ENCODE measurements at regions of chr3 and their contacts with region 1.

Region 1: DNA sequence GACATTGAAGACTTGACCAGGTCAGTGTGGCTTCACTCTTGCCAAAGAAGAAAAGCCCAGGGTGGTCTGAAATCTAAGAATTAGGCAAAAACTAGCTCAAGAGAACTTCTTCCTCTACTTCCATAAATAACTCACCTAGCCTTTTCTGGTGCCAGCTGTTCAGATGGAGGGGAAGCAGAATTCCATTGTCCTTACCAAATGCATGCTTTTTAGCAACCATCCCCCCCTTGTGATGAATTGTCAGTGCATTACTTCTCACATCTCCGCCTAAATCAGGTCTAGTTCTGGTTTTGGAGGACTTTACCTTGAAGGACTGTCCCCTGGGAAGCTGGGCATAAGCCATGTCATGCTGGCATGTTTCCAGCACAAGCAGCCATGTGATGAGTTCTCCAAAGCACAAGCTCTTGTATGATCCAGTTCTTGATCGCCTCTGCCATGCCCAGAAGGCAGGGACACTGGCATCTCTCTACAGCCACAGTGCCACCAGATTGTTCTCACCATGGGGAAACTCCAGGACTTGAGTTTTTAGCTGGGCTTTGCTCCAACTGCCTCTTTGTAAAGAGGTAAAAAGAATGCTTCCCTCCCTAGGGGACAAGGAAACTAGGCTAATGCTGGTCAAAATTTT is 96.4 kb upstream of the IL12A start:
- DNase-seq: peak in 1 of 2 donors; percentile 50
- ATAC-seq: peak; percentile 52 to 86 (median 63)
- H3K4me3 ChIP-seq: no peak overlapping the region
- H3K27ac ChIP-seq: peak overlapping the region in 6 of 10 donors; percentile 4 to 68 (median 58)
- H3K4me1 ChIP-seq: peaks cover 13 to 74% (median 62%) of the 10 kb centered on the region in 9 donors
- H3K27me3 ChIP-seq: no peaks in the 10 kb centered on the region
- CTCF ChIP-seq: no peak

Region 2: GRCh38 chr3:159326998-159327397 is 565.3 kb before region 1 on chr3:
- intact Hi-C with region 1: no loop called
- DNase-seq: no peak
- ATAC-seq: no peak
- H3K4me3 ChIP-seq: no peak overlapping the region
- H3K27ac ChIP-seq: no peak overlapping the region
- H3K4me1 ChIP-seq: no peaks in the 10 kb centered on the region
- H3K27me3 ChIP-seq: no peaks in the 10 kb centered on the region
- CTCF ChIP-seq: no peak

Region 3: DNA sequence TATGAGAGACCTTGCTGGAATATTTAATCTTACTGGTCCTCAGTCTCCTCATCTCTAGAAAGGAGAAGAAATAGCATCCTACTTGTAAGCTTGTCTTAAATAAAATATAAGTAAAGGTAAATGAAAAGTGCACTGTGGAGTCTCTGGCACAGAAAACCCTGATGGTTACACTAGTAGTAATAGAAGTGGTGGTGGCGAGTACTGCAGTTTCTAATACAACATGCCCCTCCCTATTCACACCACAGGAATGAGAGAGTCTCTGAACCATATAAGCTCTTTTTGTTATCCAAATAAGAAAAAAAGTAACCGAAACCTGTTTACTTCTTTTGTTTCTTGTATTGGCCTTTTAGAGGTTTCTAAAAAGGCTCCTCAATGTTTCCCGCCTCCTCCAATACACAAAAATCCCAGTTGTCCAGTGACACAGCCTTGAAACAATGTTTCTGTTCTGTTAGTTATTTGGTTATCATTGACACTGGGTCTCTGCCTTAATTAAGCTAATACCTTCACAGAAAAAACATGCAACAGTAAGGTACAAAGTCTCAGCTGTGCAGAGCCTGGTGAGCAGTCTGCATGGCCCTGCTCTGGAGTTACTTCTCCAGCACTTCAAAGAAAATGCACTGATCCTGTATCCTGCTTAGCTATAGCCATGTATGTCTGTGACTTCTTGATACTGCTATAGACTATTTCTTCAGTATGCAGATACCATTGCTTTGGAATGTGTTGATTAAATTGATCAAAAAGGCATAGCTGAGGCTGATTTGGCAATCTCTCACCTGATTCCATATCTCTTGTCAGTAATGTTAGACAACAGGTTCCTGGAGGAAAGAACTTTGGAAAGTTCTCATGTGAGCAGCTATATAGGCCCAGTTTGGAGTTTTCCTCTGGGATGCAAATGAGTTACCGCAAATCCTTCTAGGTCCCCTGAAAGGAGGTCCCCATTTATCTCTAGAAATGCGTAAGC is 219.3 kb before region 1 on chr3:
- intact Hi-C with region 1: no loop called
- DNase-seq: no peak
- ATAC-seq: no peak
- H3K4me3 ChIP-seq: no peak overlapping the region
- H3K27ac ChIP-seq: no peak overlapping the region
- H3K4me1 ChIP-seq: peaks cover 0 to 21% (median 4%) of the 10 kb centered on the region in 9 donors
- H3K27me3 ChIP-seq: no peaks in the 10 kb centered on the region
- CTCF ChIP-seq: no peak

Region 4: DNA sequence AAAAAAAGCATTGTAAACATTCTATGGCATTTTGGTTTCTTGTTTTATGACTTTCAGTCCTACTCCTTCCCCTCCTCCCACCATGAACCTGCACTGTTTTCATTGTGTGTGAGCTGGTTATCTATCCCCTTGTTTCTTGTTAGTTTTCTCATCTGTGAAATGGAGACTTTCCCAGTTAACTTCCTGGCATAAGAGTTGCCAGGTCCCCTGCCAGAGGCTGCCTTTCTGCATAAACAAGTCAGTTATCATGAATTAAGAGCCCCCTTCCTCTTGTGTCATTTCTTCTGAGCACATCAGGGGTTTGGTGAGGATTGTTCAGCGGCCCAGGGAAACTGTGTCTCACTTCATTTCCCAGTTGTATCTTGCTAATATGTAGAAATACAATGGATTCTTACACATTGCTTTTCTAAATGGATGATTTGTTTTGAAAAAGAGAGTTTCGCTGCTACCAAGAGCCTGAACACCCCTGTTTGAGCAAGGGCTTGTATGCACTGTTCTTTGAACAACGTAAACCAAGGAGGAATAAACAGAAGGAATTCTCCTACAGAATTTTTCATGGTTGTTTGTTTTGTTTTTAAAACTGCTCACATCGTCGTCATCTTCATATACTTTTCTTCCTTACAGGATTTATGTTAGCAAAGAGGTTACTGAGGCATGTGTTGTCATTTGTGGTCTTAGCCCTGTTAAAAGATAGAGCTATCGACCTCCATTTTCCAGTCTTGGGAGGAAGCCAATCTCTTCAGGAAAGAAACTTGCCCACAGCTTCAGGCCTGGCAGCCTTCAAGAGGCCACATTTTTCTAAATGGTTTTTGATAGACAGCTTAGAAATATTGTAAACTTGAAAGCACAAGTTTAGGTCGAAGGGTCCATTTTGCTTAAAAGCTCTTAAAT is 48.2 kb before region 1 on chr3:
- intact Hi-C with region 1: no loop called
- DNase-seq: no peak
- ATAC-seq: no peak
- H3K4me3 ChIP-seq: no peak overlapping the region
- H3K27ac ChIP-seq: peak overlapping the region in 6 of 10 donors; percentile 13 to 53 (median 31)
- H3K4me1 ChIP-seq: peaks cover 10 to 91% (median 68%) of the 10 kb centered on the region in 9 donors
- H3K27me3 ChIP-seq: no peaks in the 10 kb centered on the region
- CTCF ChIP-seq: no peak

Region 5: DNA sequence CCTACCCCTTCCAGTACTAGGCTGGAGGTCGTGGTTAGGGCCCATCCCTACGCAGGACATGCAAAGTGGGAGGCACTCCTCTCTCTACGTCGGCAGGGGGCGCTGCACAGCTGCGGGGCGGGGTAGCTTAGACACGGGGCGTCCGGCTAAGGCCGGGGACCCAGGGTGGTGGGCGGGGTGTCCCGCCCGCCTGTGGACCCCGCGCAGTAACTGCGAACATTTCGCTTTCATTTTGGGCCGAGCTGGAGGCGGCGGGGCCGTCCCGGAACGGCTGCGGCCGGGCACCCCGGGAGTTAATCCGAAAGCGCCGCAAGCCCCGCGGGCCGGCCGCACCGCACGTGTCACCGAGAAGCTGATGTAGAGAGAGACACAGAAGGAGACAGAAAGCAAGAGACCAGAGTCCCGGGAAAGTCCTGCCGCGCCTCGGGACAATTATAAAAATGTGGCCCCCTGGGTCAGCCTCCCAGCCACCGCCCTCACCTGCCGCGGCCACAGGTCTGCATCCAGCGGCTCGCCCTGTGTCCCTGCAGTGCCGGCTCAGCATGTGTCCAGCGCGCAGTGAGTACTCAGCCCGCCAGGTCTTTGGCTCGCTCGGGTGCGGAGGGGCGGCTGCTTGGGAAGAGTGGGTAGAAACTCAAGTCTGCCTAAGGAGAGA is 96.5 kb after region 1 on chr3 and contains the start of gene IL12A:
- intact Hi-C with region 1: loop called in 3 of 10 experiments (anchors 5 kb)
- DNase-seq: peak; percentile 81 to 85
- ATAC-seq: peak; percentile 94 to 98 (median 97)
- H3K4me3 ChIP-seq: peak within 1 kb of the TSS; percentile 43 to 86 (median 78)
- H3K27ac ChIP-seq: peak within 1 kb of the TSS in 6 of 10 donors; percentile 17 to 71 (median 36)
- H3K4me1 ChIP-seq: peaks cover 0 to 20% (median 10%) of the 10 kb centered on the region in 9 donors
- H3K27me3 ChIP-seq: no peaks in the 10 kb centered on the region
- CTCF ChIP-seq: peak; percentile 78 to 99 (median 96)
- total RNA-seq, gene IL12A: 0.53 to 2.3 (median 1.1) TPM

Measured in heart right ventricle (tissue), 16 donors.